Sigmoid colon (tissue), 7 donors: ENCODE measurements at regions of chr13 and their contacts with region 1.

Region 1: GRCh38 chr13:67224148-67224846 is 5.8 kb downstream of the PCDH9 start:
- DNase-seq: peak; percentile 92
- H3K4me3 ChIP-seq: peak overlapping the region; percentile 13 to 28 (median 19)
- H3K27ac ChIP-seq: peak overlapping the region in 1 of 4 donors; percentile 3
- H3K4me1 ChIP-seq: peaks cover 0 to 13% (median 7%) of the 10 kb centered on the region in 4 donors
- H3K27me3 ChIP-seq: no peaks in the 10 kb centered on the region
- CTCF ChIP-seq: peak; percentile 57 to 69 (median 64)
- EP300 ChIP-seq: no peak
- POLR2A ChIP-seq: no peak

Region 2: DNA sequence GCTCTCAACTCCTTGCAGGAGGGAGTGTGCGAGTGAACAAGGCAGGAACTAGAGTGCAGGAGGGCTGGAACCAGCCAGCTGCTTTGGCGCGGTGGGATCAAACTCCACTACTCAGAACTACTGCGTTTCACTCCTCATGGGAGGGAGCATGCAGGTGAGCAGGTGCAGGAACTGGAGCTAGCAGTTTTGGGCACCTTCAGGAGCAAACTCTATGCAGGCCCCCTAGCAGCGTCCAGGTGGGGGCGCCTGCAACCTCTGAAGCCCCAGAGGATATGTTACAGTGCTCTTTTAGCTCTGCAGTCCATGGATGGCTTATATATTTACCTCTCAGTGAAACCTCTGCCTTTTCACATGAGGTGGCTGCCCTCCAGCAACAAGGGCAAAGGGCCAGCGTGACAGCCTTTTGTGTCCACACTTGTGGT is 1297.5 kb before region 1 on chr13:
- intact Hi-C with region 1: loop called (anchors 10 kb)
- DNase-seq: no peak
- H3K4me3 ChIP-seq: no peak overlapping the region
- H3K27ac ChIP-seq: no peak overlapping the region
- H3K4me1 ChIP-seq: peaks cover 0 to 7% (median 2%) of the 10 kb centered on the region in 4 donors
- H3K27me3 ChIP-seq: no peaks in the 10 kb centered on the region
- CTCF ChIP-seq: peak in 1 of 4 experiments; percentile 33
- EP300 ChIP-seq: no peak
- POLR2A ChIP-seq: no peak

Region 3: GRCh38 chr13:66689628-66690027 is 534.7 kb before region 1 on chr13:
- intact Hi-C with region 1: loop called (anchors 10 kb)
- DNase-seq: no peak
- H3K4me3 ChIP-seq: no peak overlapping the region
- H3K27ac ChIP-seq: no peak overlapping the region
- H3K4me1 ChIP-seq: no peaks in the 10 kb centered on the region
- H3K27me3 ChIP-seq: no peaks in the 10 kb centered on the region
- CTCF ChIP-seq: no peak
- EP300 ChIP-seq: no peak
- POLR2A ChIP-seq: no peak

Region 4: DNA sequence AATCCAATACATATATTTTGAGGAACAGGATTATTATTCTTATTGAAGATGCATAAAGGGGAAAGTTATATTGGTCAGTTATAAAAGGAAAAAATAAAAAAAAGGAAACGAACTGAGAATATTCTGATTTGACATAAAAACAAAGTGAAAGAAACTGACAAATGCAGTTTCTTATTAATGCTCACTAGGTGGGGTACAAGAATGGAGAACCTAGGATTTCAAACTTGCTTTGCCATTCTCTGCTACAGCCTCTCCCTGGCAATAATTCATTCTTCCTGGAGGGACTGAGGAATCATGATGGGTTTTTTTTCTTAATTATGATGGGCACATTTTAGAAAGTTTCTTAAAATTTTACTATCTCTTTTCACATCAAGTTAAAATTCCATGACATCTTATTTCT is 149.1 kb before region 1 on chr13:
- intact Hi-C with region 1: loop called (anchors 10 kb)
- DNase-seq: no peak
- H3K4me3 ChIP-seq: no peak overlapping the region
- H3K27ac ChIP-seq: no peak overlapping the region
- H3K4me1 ChIP-seq: no peaks in the 10 kb centered on the region
- H3K27me3 ChIP-seq: no peaks in the 10 kb centered on the region
- CTCF ChIP-seq: peak in 1 of 4 experiments; percentile 6
- EP300 ChIP-seq: no peak
- POLR2A ChIP-seq: no peak

Region 5: GRCh38 chr13:67538906-67539305 is 314.6 kb after region 1 on chr13:
- intact Hi-C with region 1: no loop called
- DNase-seq: no peak
- H3K4me3 ChIP-seq: no peak overlapping the region
- H3K27ac ChIP-seq: no peak overlapping the region
- H3K4me1 ChIP-seq: no peaks in the 10 kb centered on the region
- H3K27me3 ChIP-seq: no peaks in the 10 kb centered on the region
- CTCF ChIP-seq: no peak
- EP300 ChIP-seq: no peak
- POLR2A ChIP-seq: no peak